ENCODE measurements at regions of chr3 and their contacts with region 1.

Region 1: GRCh38 chr3:186965141-186965879 is 35.0 kb downstream of the ST6GAL1 start:
- DNase-seq: peak; percentile 38
- ATAC-seq: peak; percentile 58
- H3K4me3 Mint-ChIP-seq: peak overlapping the region; percentile 39
- H3K27ac Mint-ChIP-seq: peak overlapping the region; percentile 98
- H3K4me1 Mint-ChIP-seq: peaks cover 78% of the 10 kb centered on the region
- H3K27me3 Mint-ChIP-seq: no peaks in the 10 kb centered on the region
- CTCF ChIP-seq: no peak

Region 2: DNA sequence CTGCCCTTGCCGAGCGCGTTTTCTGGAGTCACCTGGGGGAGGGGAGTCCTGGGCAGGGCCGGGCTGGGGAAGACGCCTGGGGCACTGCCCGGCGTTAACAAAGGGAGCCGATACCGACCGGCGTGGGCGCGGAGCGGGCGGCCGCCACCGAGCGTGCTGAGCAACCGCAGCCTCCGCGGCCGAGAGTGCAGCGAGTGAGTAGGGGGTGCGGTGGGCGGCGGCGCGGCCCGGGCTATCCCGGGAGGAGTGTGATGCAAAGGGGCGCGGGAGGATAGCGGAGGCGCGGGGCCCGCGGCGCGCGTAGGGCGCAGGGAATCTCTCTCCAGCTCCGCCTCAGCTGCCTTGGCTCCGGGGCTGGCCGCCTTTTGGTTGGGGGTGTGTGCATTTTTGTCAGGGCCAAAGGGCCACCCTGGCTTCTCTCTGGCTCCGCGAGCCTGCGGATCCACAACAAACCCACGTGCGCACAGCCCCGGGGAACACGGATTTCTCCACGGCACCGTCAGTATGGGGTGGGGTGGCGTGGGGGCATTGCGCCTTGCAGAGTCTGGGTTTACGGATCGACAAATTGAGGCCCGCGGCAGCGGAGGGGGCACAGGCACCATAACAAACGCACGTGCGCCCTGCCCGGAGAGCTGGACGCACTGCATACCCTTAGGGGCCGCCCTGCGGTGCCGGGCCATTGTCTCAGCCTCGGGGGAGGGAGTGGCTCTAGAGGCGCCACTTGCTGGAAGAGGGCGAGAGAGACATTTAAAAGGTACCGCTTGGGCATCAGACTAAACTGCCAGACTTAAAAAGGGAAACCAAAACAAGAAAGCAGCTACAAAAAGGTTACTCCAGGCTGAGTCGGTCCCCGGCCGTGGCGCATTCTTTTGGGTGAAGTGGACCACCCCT is 34.4 kb before region 1 on chr3:
- CTCF ChIA-PET with region 1: interaction called, 10 read pairs
- POLR2A ChIA-PET with region 1: no interaction called
- DNase-seq: peak; percentile 87
- ATAC-seq: peak; percentile 68
- H3K4me3 Mint-ChIP-seq: peak overlapping the region; percentile 92
- H3K27ac Mint-ChIP-seq: peak overlapping the region; percentile 87
- H3K4me1 Mint-ChIP-seq: peaks cover 36% of the 10 kb centered on the region
- H3K27me3 Mint-ChIP-seq: peaks cover 19% of the 10 kb centered on the region
- CTCF ChIP-seq: no peak

Measured in WTC11 (cell line).